HEK293 (cell line): ENCODE measurements at regions of chr12 and their contacts with region 1.

Region 1: GRCh38 chr12:3998968-3999826 is 126.0 kb upstream of the PARP11 start:
- H3K4me3 ChIP-seq: no peak overlapping the region
- H3K27ac ChIP-seq: no peak overlapping the region
- H3K4me1 ChIP-seq: no peaks in the 10 kb centered on the region
- CTCF ChIP-seq: no peak

Region 2: DNA sequence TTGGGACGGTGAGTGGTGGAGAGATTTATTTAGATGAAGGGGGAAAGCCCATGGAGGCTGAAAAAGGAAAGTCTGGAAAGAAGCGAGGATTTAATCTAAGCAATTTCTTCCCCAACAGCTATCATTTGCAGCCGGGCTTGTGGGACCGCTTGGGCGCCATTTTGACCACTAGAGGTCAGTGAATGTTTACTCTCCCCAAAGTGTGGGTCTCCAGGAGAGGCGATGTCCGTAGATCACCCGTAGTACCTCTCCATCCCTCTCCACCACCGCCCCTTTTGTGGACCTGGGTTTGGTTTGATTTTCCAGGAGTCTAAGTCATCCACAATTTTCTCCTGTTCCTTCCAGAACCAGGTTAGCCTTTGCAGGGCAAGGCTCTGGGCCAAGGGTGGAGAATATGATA is 34.8 kb before region 1 on chr12:
- CTCF ChIA-PET with region 1: interaction called, 12 read pairs
- POLR2A ChIA-PET with region 1: no interaction called
- H3K4me3 ChIP-seq: no peak overlapping the region
- H3K27ac ChIP-seq: no peak overlapping the region
- H3K4me1 ChIP-seq: no peaks in the 10 kb centered on the region
- CTCF ChIP-seq: no peak

Region 3: GRCh38 chr12:4030929-4031702 is 31.9 kb after region 1 on chr12:
- CTCF ChIA-PET with region 1: interaction called, 194 read pairs
- POLR2A ChIA-PET with region 1: no interaction called
- H3K4me3 ChIP-seq: peak overlapping the region; percentile 27
- H3K27ac ChIP-seq: peak overlapping the region; percentile 66; the same call in 1 of the 2 replicates
- H3K4me1 ChIP-seq: peaks cover 5% of the 10 kb centered on the region; the same call in 1 of the 2 replicates
- CTCF ChIP-seq: no peak

Region 4: DNA sequence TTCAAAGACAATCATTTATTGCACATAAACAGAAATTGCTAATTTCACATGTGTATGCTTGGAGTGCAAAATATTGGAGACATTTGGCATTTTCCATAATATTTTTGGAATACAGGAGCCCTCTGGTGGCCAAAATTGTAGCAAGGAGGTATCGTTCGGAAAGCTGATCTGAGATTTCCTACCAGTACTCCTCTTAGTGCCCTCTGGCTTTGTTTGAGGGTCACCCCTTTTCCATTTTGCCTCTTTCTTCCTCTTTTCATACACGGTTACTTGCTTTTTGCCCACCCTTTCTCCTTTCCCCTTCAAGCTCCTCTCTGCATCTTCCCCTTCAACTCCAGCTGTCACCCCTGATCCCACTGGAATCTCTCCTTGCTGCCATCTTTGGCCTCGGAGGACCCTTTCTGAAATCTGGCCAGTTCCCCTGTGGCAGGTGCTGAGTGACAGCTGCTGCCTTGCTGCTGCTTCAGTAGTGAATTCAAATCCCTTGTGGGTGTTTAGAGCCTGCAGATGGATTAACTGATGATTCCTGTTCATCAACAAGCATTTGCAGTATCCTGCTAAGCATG is 38.6 kb after region 1 on chr12:
- CTCF ChIA-PET with region 1: interaction called, 194 read pairs
- POLR2A ChIA-PET with region 1: no interaction called
- H3K4me3 ChIP-seq: no peak overlapping the region
- H3K27ac ChIP-seq: no peak overlapping the region
- H3K4me1 ChIP-seq: no peaks in the 10 kb centered on the region; the same call in 1 of the 2 replicates
- CTCF ChIP-seq: peak; percentile 56